Dendritic cell treated with granulocyte-macrophage colony-stimulating factor and Interleukin-4, amounts not matched to agents 40 ng/mL and 50 ng/mL, for 4 days (primary cell): ENCODE measurements at regions of chr1 and their contacts with region 1.

Region 1: GRCh38 chr1:159161001-159161718 is 10.3 kb upstream of the CADM3 start:
- H3K4me3 Mint-ChIP-seq: no peak overlapping the region
- H3K27ac Mint-ChIP-seq: no peak overlapping the region
- H3K4me1 Mint-ChIP-seq: peaks cover 16% of the 10 kb centered on the region
- H3K27me3 Mint-ChIP-seq: peaks cover 35% of the 10 kb centered on the region

Region 2: DNA sequence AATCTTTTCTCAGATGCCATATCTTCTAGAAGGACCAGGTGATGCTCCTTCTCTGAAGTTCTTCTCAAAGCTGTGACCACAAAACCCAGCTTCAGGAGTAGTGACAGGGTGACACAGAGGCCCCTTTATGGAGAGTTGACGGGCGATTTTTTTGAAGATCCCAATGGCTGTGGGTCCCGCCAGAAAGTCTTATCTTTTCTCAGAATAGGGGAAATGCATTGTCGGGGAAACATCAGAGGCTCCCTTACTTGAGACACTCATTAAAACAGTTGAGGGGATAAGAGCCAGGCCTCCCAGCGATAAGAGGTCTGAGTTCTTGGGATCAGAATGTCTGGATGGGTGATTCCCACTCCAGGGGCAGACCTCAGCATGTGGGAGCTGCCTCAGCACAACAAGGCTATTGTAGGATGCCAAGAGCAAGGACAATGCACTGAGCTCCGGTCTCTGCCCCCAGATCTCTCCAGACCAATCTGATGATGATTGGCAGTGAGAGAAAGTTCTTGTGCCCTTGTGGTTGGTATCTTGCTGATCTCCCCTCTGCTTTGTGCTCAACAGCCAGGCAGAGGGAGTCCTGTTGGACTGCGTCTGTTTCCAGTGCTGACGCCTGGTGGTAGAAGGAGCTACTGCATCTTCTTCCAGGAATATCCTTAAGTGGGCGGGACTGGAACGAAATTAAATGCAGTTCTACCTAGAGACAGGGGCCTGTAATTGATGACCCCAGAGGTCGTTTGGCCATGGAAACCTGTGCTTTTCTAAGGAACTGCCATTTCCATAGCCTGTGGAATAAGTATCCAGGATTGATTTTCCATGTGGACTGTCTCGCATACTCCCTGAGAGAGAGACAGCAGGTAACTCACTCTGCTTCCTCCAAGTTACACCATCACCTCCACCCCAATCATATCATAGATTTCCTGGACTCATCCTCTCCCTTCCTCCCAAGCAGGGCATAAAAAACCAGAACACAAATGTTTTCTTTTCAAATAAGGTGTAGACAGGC is 36.7 kb after region 1 on chr1:
- intact Hi-C with region 1: loop called (anchors 1 kb)
- H3K4me3 Mint-ChIP-seq: no peak overlapping the region
- H3K27ac Mint-ChIP-seq: no peak overlapping the region
- H3K4me1 Mint-ChIP-seq: peaks cover 27% of the 10 kb centered on the region
- H3K27me3 Mint-ChIP-seq: peaks cover 22% of the 10 kb centered on the region

Region 3: DNA sequence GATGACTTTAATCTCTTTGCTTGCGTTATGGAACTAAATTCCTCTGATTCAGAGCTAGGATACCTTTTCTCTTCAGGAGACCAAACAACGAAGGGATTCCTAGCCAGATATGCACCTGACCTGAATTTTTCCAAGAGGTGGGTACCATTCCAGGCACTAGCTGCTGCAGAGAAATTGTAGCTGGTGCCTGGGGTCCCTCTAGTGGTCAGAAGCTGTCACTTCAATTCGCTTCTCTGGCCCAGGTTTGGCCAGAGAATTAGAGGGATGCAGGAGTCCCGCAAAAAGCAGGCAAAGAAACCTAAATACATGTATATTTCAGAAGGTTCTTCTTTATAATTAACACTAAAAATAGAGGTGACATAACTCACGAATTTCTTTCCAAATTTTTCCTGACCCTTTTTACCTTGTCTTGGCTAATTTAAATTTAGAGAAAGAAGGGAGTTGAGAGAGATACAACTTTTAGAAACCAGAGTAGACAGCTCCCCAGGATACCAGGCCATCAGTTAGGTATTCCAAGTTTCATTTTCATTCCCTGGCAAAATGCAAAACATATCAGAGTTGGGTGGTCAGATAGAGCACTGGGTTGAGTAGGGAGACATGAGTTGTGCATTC is 53.1 kb after region 1 on chr1:
- intact Hi-C with region 1: loop called (anchors 1 kb)
- H3K4me3 Mint-ChIP-seq: no peak overlapping the region
- H3K27ac Mint-ChIP-seq: no peak overlapping the region
- H3K4me1 Mint-ChIP-seq: peaks cover 21% of the 10 kb centered on the region
- H3K27me3 Mint-ChIP-seq: peaks cover 22% of the 10 kb centered on the region

Region 4: GRCh38 chr1:159229486-159229885 is 68.3 kb after region 1 on chr1:
- intact Hi-C with region 1: no loop called
- H3K4me3 Mint-ChIP-seq: no peak overlapping the region
- H3K27ac Mint-ChIP-seq: no peak overlapping the region
- H3K4me1 Mint-ChIP-seq: peaks cover 18% of the 10 kb centered on the region
- H3K27me3 Mint-ChIP-seq: peaks cover 4% of the 10 kb centered on the region

Region 5: DNA sequence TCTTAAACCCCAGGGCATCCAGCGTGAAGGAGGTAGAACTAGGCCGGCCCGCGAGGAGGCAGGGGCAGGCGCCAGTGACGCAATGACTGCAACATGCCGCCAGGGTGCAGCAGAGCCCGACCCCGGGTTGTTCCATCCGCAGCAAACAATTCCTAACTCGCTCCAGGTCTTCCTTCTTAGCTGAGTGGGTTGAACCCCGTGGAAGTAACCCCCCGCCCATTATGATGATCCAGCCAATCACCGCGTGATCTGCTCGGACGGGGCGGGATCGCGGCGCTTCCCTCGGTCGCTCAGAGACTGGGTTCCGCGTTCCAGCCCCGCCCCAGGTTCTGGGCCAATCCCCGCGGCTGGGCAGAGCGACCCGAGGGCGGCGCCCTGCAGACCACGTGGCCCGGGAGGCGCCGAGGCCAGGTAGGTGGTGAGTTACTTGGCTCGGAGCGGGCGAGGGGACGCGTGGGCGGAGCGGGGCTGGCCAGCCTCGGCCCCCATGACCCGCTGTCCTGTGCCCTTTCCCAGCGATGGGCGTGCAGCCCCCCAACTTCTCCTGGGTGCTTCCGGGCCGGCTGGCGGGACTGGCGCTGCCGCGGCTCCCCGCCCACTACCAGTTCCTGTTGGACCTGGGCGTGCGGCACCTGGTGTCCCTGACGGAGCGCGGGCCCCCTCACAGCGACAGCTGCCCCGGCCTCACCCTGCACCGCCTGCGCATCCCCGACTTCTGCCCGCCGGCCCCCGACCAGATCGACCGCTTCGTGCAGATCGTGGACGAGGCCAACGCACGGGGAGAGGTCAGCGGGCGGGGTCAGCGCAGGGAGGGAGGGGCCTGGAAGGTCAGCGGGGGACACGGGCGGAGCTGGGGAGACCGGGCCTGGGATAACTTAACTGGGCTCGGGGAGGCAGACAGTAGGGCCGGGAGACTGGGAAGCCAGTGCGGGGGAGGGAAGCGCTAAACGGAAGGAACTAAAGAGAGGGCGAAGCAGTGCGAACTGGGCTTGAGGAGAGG is 619.7 kb after region 1 on chr1 and contains the start of gene DUSP23:
- intact Hi-C with region 1: loop called (anchors 5 kb)
- H3K4me3 Mint-ChIP-seq: peak within 1 kb of the TSS; percentile 80
- H3K27ac Mint-ChIP-seq: peak within 1 kb of the TSS; percentile 82
- H3K4me1 Mint-ChIP-seq: peaks cover 52% of the 10 kb centered on the region
- H3K27me3 Mint-ChIP-seq: no peaks in the 10 kb centered on the region

Region 6: GRCh38 chr1:159798893-159799292 is 637.7 kb after region 1 on chr1:
- intact Hi-C with region 1: loop called (anchors 5 kb)
- H3K4me3 Mint-ChIP-seq: no peak overlapping the region
- H3K27ac Mint-ChIP-seq: no peak overlapping the region
- H3K4me1 Mint-ChIP-seq: peaks cover 52% of the 10 kb centered on the region
- H3K27me3 Mint-ChIP-seq: peaks cover 13% of the 10 kb centered on the region